SK-N-SH (cell line): ENCODE measurements at regions of chr5 and their contacts with region 1.

Region 1: DNA sequence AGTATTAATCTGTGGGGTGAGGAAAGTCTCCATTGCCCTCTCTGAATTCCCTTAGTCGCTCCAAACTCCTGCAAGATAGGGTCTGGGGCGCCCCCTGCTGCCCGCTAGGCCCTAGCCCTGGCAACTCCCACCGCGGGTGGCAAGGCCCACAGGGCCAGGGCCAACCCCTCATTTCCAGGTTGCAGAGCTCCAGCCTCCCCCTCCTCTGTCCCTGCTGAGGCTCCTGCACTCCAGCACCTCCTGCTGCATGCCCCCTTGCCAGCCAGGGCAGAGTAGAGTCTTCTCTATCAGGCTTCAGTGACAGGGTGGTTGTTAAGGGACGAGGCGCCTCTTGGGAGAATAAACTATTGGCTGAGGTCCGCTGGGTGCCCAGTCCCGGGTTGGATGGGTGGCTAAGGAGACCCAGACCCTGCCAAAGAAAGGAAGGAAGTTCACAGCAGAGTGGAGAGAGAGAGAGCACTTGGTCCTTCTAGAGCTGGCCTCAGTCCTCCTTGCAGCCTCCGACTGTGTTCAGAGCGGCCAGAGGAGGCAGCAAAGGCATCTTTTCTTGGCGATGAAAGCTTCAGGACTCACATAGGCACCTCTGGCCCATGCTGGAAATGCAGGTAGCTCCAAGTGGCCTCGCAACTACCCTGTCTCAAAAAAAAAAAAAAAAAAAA is 45.6 kb downstream of the SAR1B start:
- DNase-seq: peak; percentile 89
- H3K4me3 ChIP-seq: no peak overlapping the region; a peak in 1 of 4 replicates
- H3K27ac ChIP-seq: peak overlapping the region in 1 of 2 experiments; percentile 24; a peak in 1 of 4 replicates
- H3K4me1 ChIP-seq: peaks cover 0 to 5% of the 10 kb centered on the region in 2 experiments; a peak in 1 of 4 replicates
- H3K27me3 ChIP-seq: no peaks in the 10 kb centered on the region
- CTCF ChIP-seq: peak; percentile 88
- EP300 ChIP-seq: no peak
- RAD21 ChIP-seq: peak; percentile 88

Region 2: DNA sequence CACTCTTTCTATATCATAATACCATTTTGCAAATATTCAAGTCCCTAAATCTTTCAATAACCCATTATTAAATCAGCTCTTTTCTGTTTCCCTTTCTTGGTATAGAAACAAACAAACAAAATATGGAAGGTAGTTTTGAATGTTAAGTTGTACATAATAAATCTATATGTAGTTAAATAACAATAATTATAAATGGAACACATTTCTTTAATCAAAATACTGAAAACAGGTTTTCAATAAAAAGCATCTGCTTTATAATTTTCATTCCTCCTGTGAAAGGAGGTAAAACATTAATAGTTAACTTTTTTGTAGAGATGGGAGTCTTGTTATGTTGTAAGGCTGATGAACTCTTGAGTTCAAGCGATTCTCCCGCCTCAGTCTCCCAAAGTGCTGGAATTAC is 274.2 kb before region 1 on chr5:
- CTCF ChIA-PET with region 1: interaction called, 10 read pairs
- POLR2A ChIA-PET with region 1: no interaction called
- DNase-seq: no peak
- H3K4me3 ChIP-seq: no peak overlapping the region
- H3K27ac ChIP-seq: no peak overlapping the region
- H3K4me1 ChIP-seq: no peaks in the 10 kb centered on the region
- H3K27me3 ChIP-seq: no peaks in the 10 kb centered on the region
- CTCF ChIP-seq: no peak
- EP300 ChIP-seq: no peak
- RAD21 ChIP-seq: no peak

Region 3: DNA sequence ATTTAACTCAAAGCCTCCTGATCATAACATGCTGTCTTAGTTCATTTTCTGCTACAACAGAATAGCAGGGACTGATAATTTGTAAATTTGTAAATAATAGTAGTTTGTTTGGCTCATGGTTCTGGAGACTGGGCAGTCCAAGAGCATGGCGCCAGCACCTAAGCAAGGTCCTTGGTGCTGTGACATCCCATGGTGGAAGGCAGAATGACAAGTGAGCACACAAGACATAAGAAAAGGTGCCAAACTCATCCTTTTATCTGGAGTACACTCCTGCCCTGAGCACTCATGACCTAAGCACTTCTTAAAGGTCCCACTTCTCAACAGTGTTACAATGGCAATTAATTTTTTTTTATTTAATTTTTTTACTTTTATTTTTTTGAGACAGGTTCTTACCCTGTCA is 199.6 kb before region 1 on chr5:
- CTCF ChIA-PET with region 1: interaction called, 19 read pairs
- POLR2A ChIA-PET with region 1: no interaction called
- DNase-seq: no peak
- H3K4me3 ChIP-seq: no peak overlapping the region
- H3K27ac ChIP-seq: no peak overlapping the region
- H3K4me1 ChIP-seq: no peaks in the 10 kb centered on the region
- H3K27me3 ChIP-seq: no peaks in the 10 kb centered on the region
- CTCF ChIP-seq: no peak
- EP300 ChIP-seq: no peak
- RAD21 ChIP-seq: no peak

Region 4: GRCh38 chr5:134555890-134556311 is 31.1 kb before region 1 on chr5:
- CTCF ChIA-PET with region 1: interaction called, 17 read pairs
- POLR2A ChIA-PET with region 1: no interaction called
- DNase-seq: peak; percentile 90
- H3K4me3 ChIP-seq: no peak overlapping the region
- H3K27ac ChIP-seq: peak overlapping the region; percentile 89 to 98
- H3K4me1 ChIP-seq: peaks cover 51 to 60% of the 10 kb centered on the region in 2 experiments
- H3K27me3 ChIP-seq: no peaks in the 10 kb centered on the region
- CTCF ChIP-seq: peak; percentile 17; the same call in 1 of the 2 replicates
- EP300 ChIP-seq: peak in 1 of 2 experiments; percentile 54; a peak in 2 of 4 replicates
- RAD21 ChIP-seq: no peak; the same call in 1 of the 2 replicates

Region 5: GRCh38 chr5:134604908-134605307 is 17.9 kb after region 1 on chr5:
- CTCF ChIA-PET with region 1: interaction called, 36 read pairs
- POLR2A ChIA-PET with region 1: no interaction called
- DNase-seq: no peak
- H3K4me3 ChIP-seq: no peak overlapping the region
- H3K27ac ChIP-seq: no peak overlapping the region
- H3K4me1 ChIP-seq: no peaks in the 10 kb centered on the region
- H3K27me3 ChIP-seq: no peaks in the 10 kb centered on the region
- CTCF ChIP-seq: no peak
- EP300 ChIP-seq: no peak
- RAD21 ChIP-seq: no peak

Region 6: GRCh38 chr5:134877159-134877558 is 290.2 kb after region 1 on chr5:
- CTCF ChIA-PET with region 1: no interaction called
- POLR2A ChIA-PET with region 1: no interaction called
- DNase-seq: peak; percentile 31
- H3K4me3 ChIP-seq: no peak overlapping the region
- H3K27ac ChIP-seq: no peak overlapping the region
- H3K4me1 ChIP-seq: peaks cover 9 to 22% of the 10 kb centered on the region in 2 experiments; a peak in 2 of 4 replicates
- H3K27me3 ChIP-seq: no peaks in the 10 kb centered on the region
- CTCF ChIP-seq: no peak
- EP300 ChIP-seq: no peak
- RAD21 ChIP-seq: no peak